CD8-positive, alpha-beta T cell (primary cell): ENCODE measurements at regions of chr10 and their contacts with region 1.

Region 1: GRCh38 chr10:100670828-100671479 is 74.4 kb upstream of the PAX2 start:
- DNase-seq: peak; percentile 28 to 64 (median 52)
- ATAC-seq: peak; percentile 73
- H3K4me3 ChIP-seq: no peak overlapping the region
- H3K4me3 Mint-ChIP-seq: peak overlapping the region; percentile 49
- H3K27ac ChIP-seq: no peak overlapping the region
- H3K27ac Mint-ChIP-seq: no peak overlapping the region
- H3K4me1 ChIP-seq: peaks cover 5% of the 10 kb centered on the region
- H3K4me1 Mint-ChIP-seq: peaks cover 6% of the 10 kb centered on the region
- H3K27me3 ChIP-seq: peaks cover 33% of the 10 kb centered on the region in 2 experiments
- H3K27me3 Mint-ChIP-seq: peaks cover 66% of the 10 kb centered on the region
- CTCF ChIP-seq: peak; percentile 67

Region 2: DNA sequence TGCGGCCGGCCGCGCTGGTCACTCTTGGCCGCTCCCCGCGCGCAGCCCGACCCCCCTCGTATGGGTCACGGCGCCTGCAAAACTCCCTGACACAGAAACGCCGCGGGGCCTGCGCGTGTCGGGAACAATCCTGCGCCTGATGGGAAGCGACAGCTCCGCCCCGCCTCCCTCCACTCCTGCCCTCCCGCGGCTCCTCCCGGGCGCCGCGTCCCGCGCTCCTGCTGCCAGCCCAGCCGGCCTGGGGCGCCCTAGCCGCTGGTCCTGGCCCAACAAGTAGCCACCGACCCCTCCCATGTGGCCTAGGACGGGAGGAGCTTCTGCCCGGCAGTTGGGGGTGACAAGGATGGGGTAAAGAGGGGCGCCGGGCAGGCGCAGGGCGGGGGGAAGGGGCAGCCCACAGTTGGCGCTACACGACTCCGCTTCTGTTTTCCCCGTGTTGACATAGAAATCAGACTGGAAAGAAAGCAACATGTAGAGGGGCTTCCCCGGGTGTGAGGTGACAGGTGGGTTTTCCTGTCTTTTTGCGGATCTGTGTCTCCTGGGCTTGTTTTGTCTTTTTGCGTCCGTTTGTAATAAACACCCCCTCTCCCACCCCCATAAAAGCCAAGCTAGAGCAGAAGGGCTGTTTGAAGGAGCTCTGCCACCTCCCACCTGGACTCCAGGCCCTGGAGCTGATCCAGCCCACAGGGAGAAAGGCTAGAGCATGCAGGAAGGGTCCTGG is 39.4 kb after region 1 on chr10:
- CTCF ChIA-PET with region 1: no interaction called
- POLR2A ChIA-PET with region 1: no interaction called
- intact Hi-C with region 1: no loop called
- DNase-seq: no peak
- ATAC-seq: no peak
- H3K4me3 ChIP-seq: no peak overlapping the region
- H3K4me3 Mint-ChIP-seq: no peak overlapping the region
- H3K27ac ChIP-seq: no peak overlapping the region
- H3K27ac Mint-ChIP-seq: no peak overlapping the region
- H3K4me1 ChIP-seq: peaks cover 5% of the 10 kb centered on the region
- H3K4me1 Mint-ChIP-seq: peaks cover 14% of the 10 kb centered on the region
- H3K27me3 ChIP-seq: peaks cover 8 to 18% of the 10 kb centered on the region in 2 experiments
- H3K27me3 Mint-ChIP-seq: peaks cover 78% of the 10 kb centered on the region
- CTCF ChIP-seq: no peak

Region 3: GRCh38 chr10:100743626-100744135 is 72.7 kb after region 1 on chr10:
- CTCF ChIA-PET with region 1: interaction called, 10 read pairs
- POLR2A ChIA-PET with region 1: no interaction called
- intact Hi-C with region 1: loop called in 1 of 2 experiments (anchors 5 kb)
- DNase-seq: peak in 8 of 9 experiments; percentile 10 to 80 (median 40)
- ATAC-seq: peak; percentile 79
- H3K4me3 ChIP-seq: no peak overlapping the region
- H3K4me3 Mint-ChIP-seq: peak overlapping the region; percentile 22
- H3K27ac ChIP-seq: no peak overlapping the region
- H3K27ac Mint-ChIP-seq: no peak overlapping the region
- H3K4me1 ChIP-seq: peaks cover 43% of the 10 kb centered on the region
- H3K4me1 Mint-ChIP-seq: peaks cover 37% of the 10 kb centered on the region
- H3K27me3 ChIP-seq: peaks cover 45 to 67% of the 10 kb centered on the region in 2 experiments
- H3K27me3 Mint-ChIP-seq: peaks cover 69% of the 10 kb centered on the region
- CTCF ChIP-seq: peak; percentile 42

Region 4: DNA sequence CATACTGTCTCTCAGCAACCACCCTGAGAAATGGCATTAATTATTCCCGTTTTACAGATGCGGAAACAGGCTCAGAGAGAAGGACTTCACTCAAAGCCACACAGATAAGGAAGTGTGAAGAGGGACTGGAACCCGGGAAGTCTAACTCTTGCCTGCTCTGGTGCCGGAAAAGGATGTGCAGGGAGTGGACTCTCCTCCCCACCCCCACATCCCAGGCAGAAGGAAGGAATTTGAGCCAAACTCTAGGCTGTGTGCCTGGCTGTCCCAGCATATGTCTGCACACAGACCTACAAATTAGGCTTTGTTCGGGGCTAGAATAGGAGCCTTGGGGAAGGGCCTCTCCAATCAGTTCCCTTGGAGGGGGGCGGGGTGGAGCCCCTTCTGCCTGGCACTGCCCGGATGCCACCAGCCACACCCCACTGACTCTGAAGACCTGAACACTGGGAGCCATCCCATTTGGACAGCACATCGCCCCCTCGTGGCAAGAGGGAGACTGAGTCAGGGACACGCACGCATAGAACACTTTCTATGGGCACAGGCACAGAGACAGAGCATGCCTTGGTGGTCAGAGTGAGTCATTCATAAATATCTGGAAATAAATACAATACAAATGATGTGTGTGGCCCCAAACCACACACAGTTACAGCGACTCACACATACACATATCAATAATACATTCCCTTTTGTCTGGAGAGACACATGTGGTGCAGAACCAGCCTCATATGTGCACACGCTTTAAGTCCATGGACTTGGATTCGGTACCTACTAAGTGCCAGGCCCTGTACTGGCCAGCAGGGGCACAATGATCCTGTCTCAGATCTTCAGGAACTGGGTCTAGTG is 341.8 kb after region 1 on chr10:
- CTCF ChIA-PET with region 1: interaction called, 4 read pairs
- POLR2A ChIA-PET with region 1: no interaction called
- intact Hi-C with region 1: loop called in 1 of 2 experiments (anchors 5 kb)
- DNase-seq: peak; percentile 41 to 85 (median 78)
- ATAC-seq: peak; percentile 86
- H3K4me3 ChIP-seq: no peak overlapping the region
- H3K4me3 Mint-ChIP-seq: no peak overlapping the region
- H3K27ac ChIP-seq: no peak overlapping the region
- H3K27ac Mint-ChIP-seq: no peak overlapping the region
- H3K4me1 ChIP-seq: peaks cover 6% of the 10 kb centered on the region
- H3K4me1 Mint-ChIP-seq: peaks cover 13% of the 10 kb centered on the region
- H3K27me3 ChIP-seq: peaks cover 13 to 16% of the 10 kb centered on the region in 2 experiments
- H3K27me3 Mint-ChIP-seq: peaks cover 33% of the 10 kb centered on the region
- CTCF ChIP-seq: peak; percentile 83